ENCODE measurements at regions of chr12 and their contacts with region 1.

Region 1: GRCh38 chr12:89244536-89244935 is 107.8 kb downstream of the DUSP6 start:
- DNase-seq: no peak
- ATAC-seq: peak; percentile 78
- H3K4me3 Mint-ChIP-seq: peak overlapping the region; percentile 62
- H3K27ac Mint-ChIP-seq: peak overlapping the region; percentile 88
- H3K4me1 Mint-ChIP-seq: peaks cover 39% of the 10 kb centered on the region
- H3K27me3 Mint-ChIP-seq: no peaks in the 10 kb centered on the region

Region 2: GRCh38 chr12:89225808-89226411 is 18.6 kb before region 1 on chr12:
- POLR2A ChIA-PET with region 1: interaction called, 32 read pairs
- DNase-seq: no peak
- ATAC-seq: peak; percentile 48
- H3K4me3 Mint-ChIP-seq: peak overlapping the region; percentile 70
- H3K27ac Mint-ChIP-seq: peak overlapping the region; percentile 88
- H3K4me1 Mint-ChIP-seq: peaks cover 52% of the 10 kb centered on the region
- H3K27me3 Mint-ChIP-seq: no peaks in the 10 kb centered on the region

Measured in activated naive CD8-positive, alpha-beta T cell treated with anti-CD3 and anti-CD28 coated beads, Interleukin-2, amount 10 ng/mL, durations not matched to agents 7 days and 5 days (primary cell).